ENCODE measurements at regions of chr3 and their contacts with region 1.

Region 1: DNA sequence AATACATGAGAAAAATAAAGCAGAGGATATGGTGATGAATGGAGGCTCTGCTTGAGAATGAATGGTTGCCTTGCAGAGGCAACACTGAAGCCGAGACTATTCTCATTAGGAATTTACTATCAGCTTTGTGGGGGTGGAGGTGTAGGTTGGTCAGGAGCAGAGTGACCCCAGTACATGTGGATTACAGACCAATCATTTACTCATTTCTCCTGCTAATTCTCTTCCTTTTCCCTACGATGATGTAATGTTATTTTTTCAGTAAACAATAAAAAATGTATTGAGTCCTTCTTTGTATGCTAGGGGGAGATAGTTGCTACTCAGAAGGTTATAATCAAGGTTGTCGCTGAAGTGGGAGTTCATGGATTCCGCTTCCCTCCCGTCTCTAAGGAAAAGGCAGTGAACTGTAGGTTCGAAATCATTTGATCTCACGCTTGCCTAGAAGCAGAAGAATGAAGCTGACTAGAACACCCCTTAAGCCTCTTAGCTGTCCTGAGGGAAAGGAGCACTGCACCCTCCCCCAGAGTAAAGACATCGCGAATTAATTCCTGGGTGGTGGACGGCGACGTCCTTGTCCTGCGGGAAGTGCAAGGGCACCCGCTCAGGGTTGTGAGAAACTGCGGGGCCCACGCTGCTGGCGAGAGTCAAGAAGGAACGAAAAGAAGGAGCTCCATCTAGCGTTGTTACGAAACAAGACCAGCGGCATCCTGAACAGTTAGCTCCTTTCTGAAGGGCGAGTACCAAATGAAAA is 213.2 kb upstream of the PFN2 start:
- DNase-seq: peak; percentile 61 to 95 (median 83)

Region 2: DNA sequence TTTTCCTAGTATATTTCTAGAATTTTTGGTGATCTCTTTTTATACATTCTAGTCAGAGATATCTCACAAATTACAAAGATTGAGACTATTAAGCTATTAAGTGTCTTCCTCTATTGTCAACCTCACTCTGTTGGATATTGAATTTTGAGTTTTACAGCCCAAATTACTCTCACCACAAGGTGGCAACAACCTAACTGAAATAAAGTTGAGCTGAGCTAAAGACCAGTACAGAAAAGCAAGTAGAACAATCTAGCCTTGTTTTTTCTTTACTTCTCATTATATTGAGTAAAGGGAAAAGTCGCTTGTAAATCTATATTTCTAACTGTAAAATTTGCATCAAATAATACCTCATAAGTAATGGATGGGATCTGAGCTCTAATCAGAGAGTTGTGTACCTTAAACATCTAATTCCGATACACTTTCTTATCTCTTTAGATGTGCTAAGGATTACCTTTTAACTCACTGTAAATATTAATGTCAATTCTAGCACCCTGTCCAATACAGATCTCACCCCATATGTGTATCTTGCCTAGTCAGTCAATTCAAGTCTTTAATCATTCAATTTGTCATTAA is 418.0 kb before region 1 on chr3:
- intact Hi-C with region 1: loop called (anchors 10 kb)
- DNase-seq: peak in 12 of 42 donors; percentile 17 to 78 (median 46)

Measured in head of caudate nucleus (tissue), 42 donors.